SK-N-SH (cell line): ENCODE measurements at regions of chr19 and their contacts with region 1.

Region 1: GRCh38 chr19:19531951-19532805 is 3.5 kb downstream of the YJEFN3 start:
- DNase-seq: peak; percentile 86
- H3K4me3 ChIP-seq: no peak overlapping the region; a peak in 1 of 4 replicates
- H3K27ac ChIP-seq: no peak overlapping the region
- H3K4me1 ChIP-seq: peaks cover 0 to 14% of the 10 kb centered on the region in 2 experiments; a peak in 1 of 4 replicates
- H3K27me3 ChIP-seq: no peaks in the 10 kb centered on the region
- CTCF ChIP-seq: peak; percentile 95
- EP300 ChIP-seq: no peak
- RAD21 ChIP-seq: peak; percentile 89

Region 2: GRCh38 chr19:19515764-19516519 is 16.2 kb before region 1 on chr19 and contains the start of gene NDUFA13:
- CTCF ChIA-PET with region 1: interaction called, 38 read pairs
- POLR2A ChIA-PET with region 1: interaction called, 15 read pairs
- DNase-seq: peak; percentile 93
- H3K4me3 ChIP-seq: peak within 1 kb of the TSS; percentile 65 to 95
- H3K27ac ChIP-seq: peak within 1 kb of the TSS; percentile 50 to 80
- H3K4me1 ChIP-seq: peaks cover 0 to 11% of the 10 kb centered on the region in 2 experiments; a peak in 1 of 4 replicates
- H3K27me3 ChIP-seq: no peaks in the 10 kb centered on the region
- CTCF ChIP-seq: peak; percentile 29; the same call in 1 of the 2 replicates
- EP300 ChIP-seq: no peak
- RAD21 ChIP-seq: no peak
- polyA plus RNA-seq, gene NDUFA13: 1,643 and 1,828 TPM in 2 replicates

Region 3: DNA sequence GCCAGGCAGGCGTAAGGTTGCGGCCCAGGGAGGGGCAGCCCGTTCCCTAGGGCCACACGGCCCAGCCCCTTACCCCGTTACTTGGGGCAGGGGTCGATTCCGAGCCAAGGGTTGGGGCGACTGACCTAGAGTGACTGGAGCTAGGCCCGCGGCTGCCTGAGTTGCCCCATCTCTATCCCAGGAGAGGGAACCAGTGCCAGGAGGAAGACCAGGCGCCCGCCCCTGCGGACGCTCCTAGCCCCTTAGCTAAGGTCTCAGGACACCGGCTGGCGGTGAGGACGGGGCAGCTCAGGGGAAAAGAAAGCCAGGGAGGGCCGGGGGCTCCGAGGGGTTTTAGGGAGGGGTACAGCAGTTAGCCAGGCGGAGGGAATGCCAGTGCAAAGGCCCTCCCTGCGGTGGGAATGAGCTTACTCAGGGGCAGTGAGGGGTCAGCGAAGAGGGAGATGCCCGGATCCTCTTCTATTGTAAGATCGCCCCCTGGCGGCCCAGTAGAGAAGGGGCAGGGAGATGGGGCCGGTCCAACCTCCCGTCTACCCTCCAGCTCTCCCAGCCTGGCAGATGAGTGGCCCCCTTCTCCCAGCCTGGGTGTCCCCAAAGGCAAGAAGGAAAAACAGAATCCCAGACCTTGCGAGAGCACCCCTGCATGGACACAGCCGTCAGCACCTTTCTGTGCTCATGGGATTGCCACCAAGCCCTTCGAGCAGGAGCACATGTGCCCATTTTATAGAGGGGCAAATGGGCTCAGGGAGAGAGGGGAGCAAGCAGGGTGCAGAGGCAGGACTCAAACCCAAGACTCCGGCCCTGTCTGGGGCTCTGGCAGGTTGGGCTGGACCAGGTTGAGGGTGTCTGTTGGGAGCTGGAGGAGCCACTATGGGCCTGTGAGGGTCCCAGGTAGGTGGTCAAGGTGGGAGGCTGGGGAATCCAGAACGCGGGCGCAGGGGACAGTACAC is 22.2 kb after region 1 on chr19:
- CTCF ChIA-PET with region 1: interaction called, 258 read pairs
- POLR2A ChIA-PET with region 1: no interaction called
- DNase-seq: peak; percentile 86
- H3K4me3 ChIP-seq: no peak overlapping the region
- H3K27ac ChIP-seq: no peak overlapping the region
- H3K4me1 ChIP-seq: no peaks in the 10 kb centered on the region; a peak in 1 of 4 replicates
- H3K27me3 ChIP-seq: no peaks in the 10 kb centered on the region
- CTCF ChIP-seq: peak; percentile 69
- EP300 ChIP-seq: no peak
- RAD21 ChIP-seq: peak; percentile 57

Region 4: GRCh38 chr19:19627621-19628500 is 95.7 kb after region 1 on chr19 and contains the start of gene LPAR2:
- CTCF ChIA-PET with region 1: interaction called, 17 read pairs
- POLR2A ChIA-PET with region 1: interaction called, 3 read pairs
- DNase-seq: peak; percentile 96
- H3K4me3 ChIP-seq: peak within 1 kb of the TSS in 1 of 2 experiments; percentile 56; a peak in 2 of 4 replicates
- H3K27ac ChIP-seq: peak within 1 kb of the TSS in 1 of 2 experiments; percentile 65; a peak in 1 of 4 replicates
- H3K4me1 ChIP-seq: peaks cover 0 to 13% of the 10 kb centered on the region in 2 experiments; a peak in 1 of 4 replicates
- H3K27me3 ChIP-seq: no peaks in the 10 kb centered on the region
- CTCF ChIP-seq: no peak
- EP300 ChIP-seq: no peak
- RAD21 ChIP-seq: no peak
- polyA plus RNA-seq, gene LPAR2: 4.3 and 4.5 TPM in 2 replicates

Region 5: DNA sequence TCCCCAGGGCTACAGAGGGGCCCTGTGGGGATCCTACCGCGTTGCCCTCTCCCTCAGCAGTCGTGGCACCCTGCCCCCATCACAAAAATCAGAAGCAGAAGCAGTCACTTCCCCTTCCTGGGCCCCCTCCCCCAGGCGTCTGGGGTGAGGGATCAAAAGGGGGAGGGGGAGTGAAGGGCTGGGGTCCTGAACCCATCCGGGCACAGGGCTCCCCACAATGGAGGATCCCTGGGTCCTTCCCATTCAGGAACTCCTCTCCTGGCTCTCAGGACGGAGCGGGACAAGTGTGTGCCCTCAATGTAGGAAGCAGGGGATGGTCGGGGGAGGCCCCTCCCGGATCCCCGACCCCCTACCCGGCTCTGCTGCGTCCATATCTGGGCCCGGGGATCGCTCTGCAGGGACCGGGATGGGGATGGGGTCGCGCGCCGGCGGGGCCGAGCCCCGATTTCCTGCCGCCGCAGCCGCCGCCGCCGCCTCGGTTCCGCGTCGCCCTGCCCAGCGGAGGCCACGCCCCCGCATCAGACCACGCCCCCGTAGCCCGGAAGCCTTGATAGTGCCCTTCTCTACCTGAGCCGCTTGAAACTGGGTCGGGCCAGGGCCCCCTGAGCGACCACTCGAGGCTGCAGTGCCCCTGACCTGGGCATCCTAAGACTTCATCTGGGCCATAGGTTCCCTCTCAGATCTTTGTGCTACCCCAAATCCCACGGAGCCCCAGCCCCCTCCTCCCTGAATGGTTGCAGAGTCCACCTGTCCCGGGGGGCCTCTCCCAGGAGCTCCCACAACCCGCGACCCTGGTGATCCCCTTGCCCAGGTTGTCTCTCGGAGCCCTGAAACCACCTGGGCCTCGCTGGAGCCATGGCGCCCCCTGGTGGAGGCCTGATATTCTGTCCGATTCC is 111.2 kb after region 1 on chr19 and contains the start of gene GMIP:
- CTCF ChIA-PET with region 1: interaction called, 175 read pairs
- POLR2A ChIA-PET with region 1: interaction called, 6 read pairs
- DNase-seq: peak; percentile 93
- H3K4me3 ChIP-seq: peak within 1 kb of the TSS; percentile 71 to 98
- H3K27ac ChIP-seq: peak within 1 kb of the TSS in 1 of 2 experiments; percentile 75; a peak in 2 of 4 replicates
- H3K4me1 ChIP-seq: peaks cover 0 to 8% of the 10 kb centered on the region in 2 experiments; a peak in 1 of 4 replicates
- H3K27me3 ChIP-seq: no peaks in the 10 kb centered on the region
- CTCF ChIP-seq: peak; percentile 97
- EP300 ChIP-seq: no peak
- RAD21 ChIP-seq: peak; percentile 82
- polyA plus RNA-seq, gene GMIP: 5.3 and 6.3 TPM in 2 replicates

Region 6: DNA sequence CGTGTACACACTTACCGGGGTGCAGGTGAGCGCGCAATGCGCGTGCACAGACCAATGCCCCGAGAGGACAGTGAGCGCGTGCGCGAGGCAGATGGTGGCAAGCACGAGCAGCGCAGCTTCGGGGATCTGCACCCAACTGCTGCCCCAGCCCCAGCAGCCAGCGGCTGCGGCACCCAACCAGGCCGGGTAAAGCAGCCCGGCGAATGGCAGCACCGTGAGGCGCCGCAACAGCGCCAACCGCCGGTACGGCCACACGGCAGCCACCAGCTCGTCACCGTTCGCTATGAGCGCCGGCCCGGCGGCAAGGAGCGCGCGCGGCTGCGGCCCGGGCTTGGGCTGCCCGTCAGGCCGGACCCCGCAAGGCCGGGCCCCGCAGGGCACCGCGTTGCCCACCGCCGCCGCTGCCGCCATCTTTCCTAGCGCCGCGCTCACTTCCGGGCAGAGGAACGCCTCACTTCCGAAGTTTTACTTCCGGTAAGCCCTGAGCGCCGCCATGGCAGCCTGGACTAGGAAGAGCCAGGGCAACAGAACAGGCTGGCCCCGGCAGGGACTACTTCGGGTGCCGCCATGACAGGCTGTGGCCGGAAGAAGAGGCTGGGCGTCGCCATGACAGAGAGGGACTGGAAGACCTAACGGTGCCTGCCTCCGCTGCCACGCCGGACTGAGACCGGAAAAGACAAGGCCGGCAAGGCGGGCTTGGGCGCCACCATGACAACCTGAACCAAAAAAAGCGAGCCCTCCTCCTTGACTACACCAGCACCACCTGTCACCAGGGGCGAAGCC is 131.3 kb after region 1 on chr19 and contains the start of gene ATP13A1:
- CTCF ChIA-PET with region 1: interaction called, 17 read pairs
- POLR2A ChIA-PET with region 1: interaction called, 3 read pairs
- DNase-seq: peak; percentile 93
- H3K4me3 ChIP-seq: peak within 1 kb of the TSS; percentile 83 to 90
- H3K27ac ChIP-seq: peak within 1 kb of the TSS; percentile 88 to 92
- H3K4me1 ChIP-seq: peaks cover 0 to 20% of the 10 kb centered on the region in 2 experiments; a peak in 2 of 4 replicates
- H3K27me3 ChIP-seq: no peaks in the 10 kb centered on the region
- CTCF ChIP-seq: 0 out of 2 replicates have a peak, but pooled peaks have one; percentile 18
- EP300 ChIP-seq: no peak
- RAD21 ChIP-seq: no peak
- polyA plus RNA-seq, gene ATP13A1: 49.6 and 67.9 TPM in 2 replicates